ENCODE measurements at regions of chr9 and their contacts with region 1.

Region 1: GRCh38 chr9:88738709-88739108 is 203.7 kb downstream of the NXNL2 start:
- DNase-seq: no peak
- H3K4me3 ChIP-seq: no peak overlapping the region
- H3K27ac ChIP-seq: no peak overlapping the region
- H3K4me1 ChIP-seq: peaks cover 0 to 13% (median 4%) of the 10 kb centered on the region in 4 donors
- H3K27me3 ChIP-seq: no peaks in the 10 kb centered on the region
- CTCF ChIP-seq: no peak
- EP300 ChIP-seq: no peak
- POLR2A ChIP-seq: no peak

Region 2: DNA sequence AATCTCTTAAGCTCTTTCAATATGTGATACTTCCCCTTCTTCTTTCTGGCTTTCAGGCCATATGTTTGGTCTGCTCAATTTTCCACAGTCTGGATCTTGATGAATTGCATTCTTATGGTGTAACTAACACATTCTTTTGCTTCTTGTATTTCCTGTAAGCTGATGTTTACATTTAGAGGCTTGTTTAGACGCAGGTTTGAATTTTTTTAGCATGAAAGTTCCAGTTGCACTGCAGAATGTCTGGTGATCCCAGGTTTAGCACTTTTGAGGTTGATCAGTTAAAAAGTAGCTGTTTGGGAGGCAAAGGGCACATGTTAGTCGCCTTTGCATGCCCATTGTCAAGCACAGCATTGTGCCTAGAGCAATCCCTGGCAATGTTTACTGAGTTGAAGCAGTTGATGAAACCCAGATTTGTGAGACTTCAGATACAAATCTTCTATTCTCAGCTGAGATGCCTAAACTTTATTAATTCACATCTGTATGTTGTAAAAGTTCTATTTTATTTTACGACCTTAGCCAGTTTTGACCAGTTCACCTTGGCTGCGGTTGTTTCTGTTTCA is 540.8 kb before region 1 on chr9:
- in situ Hi-C with region 1: no loop called
- intact Hi-C with region 1: loop called (anchors 5 kb)
- DNase-seq: no peak
- H3K4me3 ChIP-seq: peak overlapping the region in 1 of 4 donors; percentile 23
- H3K27ac ChIP-seq: peak overlapping the region; percentile 49 to 73 (median 60)
- H3K4me1 ChIP-seq: peaks cover 0 to 30% (median 17%) of the 10 kb centered on the region in 4 donors
- H3K27me3 ChIP-seq: no peaks in the 10 kb centered on the region
- CTCF ChIP-seq: no peak
- EP300 ChIP-seq: no peak
- POLR2A ChIP-seq: no peak

Region 3: DNA sequence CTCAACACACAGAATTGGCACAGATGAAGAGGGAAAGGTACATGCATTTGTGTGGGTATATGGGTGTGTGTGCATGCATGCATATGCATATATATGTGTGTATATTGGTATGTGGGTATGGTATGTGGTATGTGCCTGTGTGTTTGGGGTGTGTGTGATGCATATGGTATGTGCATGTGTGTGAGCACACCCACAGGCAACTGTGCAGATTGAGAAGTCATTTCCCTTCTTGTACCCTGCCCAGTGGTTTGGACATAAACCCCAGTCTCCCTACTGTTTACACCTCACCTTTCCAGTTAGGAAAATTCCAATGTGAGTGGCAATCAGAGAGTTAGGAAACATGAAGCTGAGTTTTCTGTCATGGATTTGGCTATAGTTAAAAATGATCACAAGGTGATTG is 25.7 kb before region 1 on chr9:
- in situ Hi-C with region 1: no loop called
- intact Hi-C with region 1: loop called (anchors 1 kb)
- DNase-seq: no peak
- H3K4me3 ChIP-seq: no peak overlapping the region
- H3K27ac ChIP-seq: no peak overlapping the region
- H3K4me1 ChIP-seq: no peaks in the 10 kb centered on the region
- H3K27me3 ChIP-seq: no peaks in the 10 kb centered on the region
- CTCF ChIP-seq: no peak
- EP300 ChIP-seq: no peak
- POLR2A ChIP-seq: no peak

Measured in transverse colon (tissue), 4 donors.